ENCODE measurements at regions of chr3 and their contacts with region 1.

Region 1: GRCh38 chr3:49021813-49022687 is at the start of gene NDUFAF3:
- DNase-seq: peak; percentile 84 to 96 (median 89)
- ATAC-seq: peak; percentile 89
- H3K4me3 ChIP-seq: peak within 1 kb of the TSS; percentile 99
- H3K4me3 Mint-ChIP-seq: peak within 1 kb of the TSS; percentile 92 to 99 (median 97)
- H3K27ac ChIP-seq: peak within 1 kb of the TSS; percentile 98
- H3K27ac Mint-ChIP-seq: peak within 1 kb of the TSS; percentile 95 to 99 (median 98)
- H3K4me1 ChIP-seq: peaks cover 24 to 25% of the 10 kb centered on the region in 2 donors
- H3K4me1 Mint-ChIP-seq: peaks cover 21 to 61% (median 47%) of the 10 kb centered on the region in 7 donors
- H3K27me3 ChIP-seq: no peaks in the 10 kb centered on the region
- H3K27me3 Mint-ChIP-seq: peaks cover 0 to 2% (median 0%) of the 10 kb centered on the region in 5 donors
- total RNA-seq, gene NDUFAF3: 63.8 to 110 (median 89.3) TPM

Region 2: GRCh38 chr3:49158108-49158709 is 136.2 kb after region 1 on chr3:
- CTCF ChIA-PET with region 1: no interaction called
- POLR2A ChIA-PET with region 1: interaction called, 3 read pairs
- intact Hi-C with region 1: loop called (anchors 1 to 5 kb)
- DNase-seq: peak in 8 of 9 donors; percentile 40 to 68 (median 59)
- ATAC-seq: peak; percentile 89
- H3K4me3 ChIP-seq: no peak overlapping the region
- H3K4me3 Mint-ChIP-seq: no peak overlapping the region
- H3K27ac ChIP-seq: peak overlapping the region; percentile 20
- H3K27ac Mint-ChIP-seq: peak overlapping the region in 6 of 9 donors; percentile 3 to 82 (median 18)
- H3K4me1 ChIP-seq: no peaks in the 10 kb centered on the region
- H3K4me1 Mint-ChIP-seq: peaks cover 0 to 10% (median 5%) of the 10 kb centered on the region in 7 donors
- H3K27me3 ChIP-seq: no peaks in the 10 kb centered on the region
- H3K27me3 Mint-ChIP-seq: no peaks in the 10 kb centered on the region